Dorsolateral prefrontal cortex (tissue), 120 donors: ENCODE measurements at regions of chr18 and their contacts with region 1.

Region 1: GRCh38 chr18:35756506-35757117 is 175.1 kb downstream of the GALNT1 start:
- DNase-seq: peak in 6 of 10 donors; percentile 9 to 59 (median 50)
- H3K4me3 ChIP-seq: no peak overlapping the region
- H3K27ac ChIP-seq: no peak overlapping the region
- H3K27me3 ChIP-seq: no peaks in the 10 kb centered on the region
- CTCF ChIP-seq: peak; percentile 75 to 94 (median 86)

Region 2: GRCh38 chr18:35386600-35387351 is 369.8 kb before region 1 on chr18:
- intact Hi-C with region 1: loop called in 1 of 2 experiments (anchors 5 kb)
- DNase-seq: peak in 8 of 10 donors; percentile 25 to 70 (median 54)
- H3K4me3 ChIP-seq: peak overlapping the region in 16 of 59 donors; percentile 1 to 45 (median 16)
- H3K27ac ChIP-seq: peak overlapping the region in 7 of 59 donors; percentile 17 to 56 (median 33)
- H3K27me3 ChIP-seq: no peaks in the 10 kb centered on the region
- CTCF ChIP-seq: peak; percentile 76 to 96 (median 88)

Region 3: DNA sequence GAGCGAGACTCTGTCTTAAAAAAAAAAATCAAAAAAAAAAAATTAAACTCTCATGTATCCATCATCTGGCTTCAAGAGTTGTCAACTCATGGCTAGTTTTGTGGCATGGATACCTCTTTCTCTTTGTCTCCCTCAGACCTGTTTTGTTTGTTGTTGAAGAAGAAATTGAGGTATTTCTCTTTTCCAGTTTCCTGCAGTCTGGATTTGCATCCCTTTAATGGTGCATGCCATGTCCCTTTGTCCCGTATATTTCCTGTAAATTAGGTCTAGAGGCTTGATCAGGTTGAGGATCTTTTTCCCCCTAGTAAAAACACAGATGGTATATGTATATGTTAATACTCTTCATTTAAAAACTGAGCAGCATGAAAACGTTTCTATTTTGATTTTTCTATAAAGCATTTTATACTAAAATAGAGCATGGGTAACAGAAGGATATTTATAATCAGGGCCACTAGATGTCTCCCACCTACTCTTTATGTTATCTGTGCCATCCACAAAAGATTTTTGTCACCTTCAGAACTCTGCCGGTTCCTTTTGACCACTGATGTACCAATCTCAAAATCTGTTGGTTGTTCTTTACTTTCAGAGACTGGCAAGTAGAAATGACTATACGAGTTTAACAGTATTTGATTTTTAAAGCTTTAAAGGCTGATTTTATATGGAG is 95.0 kb before region 1 on chr18:
- intact Hi-C with region 1: loop called (anchors 5 to 10 kb)
- DNase-seq: no peak
- H3K4me3 ChIP-seq: no peak overlapping the region
- H3K27ac ChIP-seq: no peak overlapping the region
- H3K27me3 ChIP-seq: no peaks in the 10 kb centered on the region
- CTCF ChIP-seq: peak in 51 of 56 donors; percentile 14 to 72 (median 48)

Region 4: DNA sequence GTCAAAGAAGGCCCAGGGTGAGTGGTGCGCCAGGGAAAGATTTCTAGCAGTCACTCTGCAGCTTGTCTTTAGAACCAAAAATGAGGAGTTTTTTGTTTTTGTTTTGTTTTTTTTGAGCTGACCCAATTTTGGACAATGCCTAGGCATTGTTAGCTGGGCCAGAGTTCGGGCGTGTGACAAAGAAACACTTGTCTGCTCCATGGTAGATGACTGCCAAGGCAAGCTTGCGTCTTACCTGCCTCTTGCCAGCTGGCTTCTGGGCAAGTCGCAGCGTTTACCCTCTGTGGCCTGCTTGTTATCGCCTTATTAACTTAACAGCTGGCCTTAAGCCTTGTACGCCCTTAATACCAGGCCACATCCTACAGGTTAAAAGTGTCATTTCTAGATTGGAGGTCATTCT is 60.8 kb before region 1 on chr18:
- intact Hi-C with region 1: loop called in 1 of 2 experiments (anchors 2 kb)
- DNase-seq: peak; percentile 55 to 89 (median 83)
- H3K4me3 ChIP-seq: peak overlapping the region in 4 of 59 donors; percentile 1 to 23 (median 5)
- H3K27ac ChIP-seq: peak overlapping the region in 56 of 59 donors; percentile 2 to 81 (median 59)
- H3K27me3 ChIP-seq: no peaks in the 10 kb centered on the region
- CTCF ChIP-seq: peak in 6 of 56 donors; percentile 9 to 31 (median 22)

Region 5: GRCh38 chr18:35811896-35812295 is 55.3 kb after region 1 on chr18:
- intact Hi-C with region 1: no loop called
- DNase-seq: no peak
- H3K4me3 ChIP-seq: no peak overlapping the region
- H3K27ac ChIP-seq: no peak overlapping the region
- H3K27me3 ChIP-seq: peaks cover 0 to 10% (median 0%) of the 10 kb centered on the region in 45 donors
- CTCF ChIP-seq: no peak

Region 6: GRCh38 chr18:35889677-35890076 is 133.1 kb after region 1 on chr18:
- intact Hi-C with region 1: no loop called
- DNase-seq: no peak
- H3K4me3 ChIP-seq: no peak overlapping the region
- H3K27ac ChIP-seq: peak overlapping the region in 1 of 59 donors; percentile 45
- H3K27me3 ChIP-seq: no peaks in the 10 kb centered on the region
- CTCF ChIP-seq: no peak

Region 7: DNA sequence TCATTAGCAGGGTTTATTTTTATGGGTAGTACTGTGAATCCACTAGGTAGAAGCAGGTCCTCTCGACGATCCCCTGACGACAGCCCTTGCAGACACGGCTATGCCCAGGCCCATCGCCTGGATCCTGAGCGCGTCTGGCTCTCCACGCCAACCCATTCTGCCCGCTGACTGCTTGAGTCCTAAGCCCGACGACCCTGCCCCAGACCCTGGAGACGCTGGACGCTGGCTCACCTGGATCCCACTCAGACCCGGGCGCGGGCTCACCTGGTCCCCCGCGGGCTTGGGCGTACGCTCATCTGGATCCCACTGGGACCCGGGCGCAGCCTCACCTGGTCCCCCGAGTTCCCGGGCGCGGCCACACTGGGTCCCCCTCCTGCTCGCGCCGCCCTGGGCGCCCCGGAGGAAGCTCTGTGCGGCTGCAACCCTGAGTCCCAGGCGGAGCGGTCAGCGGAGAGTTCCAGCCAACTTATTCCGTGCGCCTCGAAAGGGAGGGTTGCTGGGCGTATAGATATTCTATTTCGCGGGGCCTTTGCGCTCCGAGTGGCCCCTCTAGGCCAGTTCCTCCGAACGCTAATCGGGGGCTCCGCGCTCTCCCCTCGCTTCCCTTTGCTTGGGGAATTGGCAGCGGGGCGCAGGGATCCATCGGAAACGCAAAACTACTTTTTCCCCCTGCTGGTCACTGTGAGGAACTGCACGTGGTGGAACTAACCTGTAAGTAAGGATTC is 193.5 kb after region 1 on chr18:
- intact Hi-C with region 1: loop called (anchors 2 to 5 kb)
- DNase-seq: peak in 9 of 10 donors; percentile 30 to 70 (median 55)
- H3K4me3 ChIP-seq: peak overlapping the region; percentile 41 to 88 (median 67)
- H3K27ac ChIP-seq: no peak overlapping the region
- H3K27me3 ChIP-seq: peaks cover 0 to 5% (median 0%) of the 10 kb centered on the region in 45 donors
- CTCF ChIP-seq: peak; percentile 91 to 99 (median 96)

Region 8: DNA sequence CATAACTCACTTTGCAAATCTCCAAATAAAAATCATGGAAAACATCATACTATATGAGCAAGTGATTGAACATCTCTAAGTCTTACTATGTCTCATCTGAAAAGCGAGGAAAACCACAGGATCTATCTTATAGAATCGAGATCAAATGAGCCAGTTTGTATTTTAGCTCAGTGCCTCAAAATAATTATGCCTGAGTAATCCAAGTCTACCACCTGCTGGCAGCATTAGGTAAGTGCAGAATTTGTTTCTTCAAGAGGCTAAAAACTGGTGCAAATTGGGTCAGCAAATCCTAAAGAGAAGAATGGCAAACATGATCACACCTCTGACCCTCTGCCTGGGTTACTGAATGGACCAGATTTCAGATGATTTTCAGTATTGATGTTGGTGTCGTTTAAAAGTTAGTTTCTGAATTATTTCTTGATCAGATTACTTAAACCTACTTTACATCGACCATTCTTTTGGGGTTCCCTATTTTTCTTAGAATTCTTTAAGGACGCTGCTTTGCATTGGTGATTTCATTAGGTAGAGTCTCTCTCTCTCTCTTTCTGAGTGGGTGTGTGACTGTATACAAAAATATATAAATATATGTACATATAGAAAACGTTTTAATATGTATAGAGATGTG is 528.2 kb after region 1 on chr18:
- intact Hi-C with region 1: loop called (anchors 5 to 10 kb)
- DNase-seq: peak in 2 of 10 donors; percentile 41 to 61
- H3K4me3 ChIP-seq: no peak overlapping the region
- H3K27ac ChIP-seq: no peak overlapping the region
- H3K27me3 ChIP-seq: peaks cover 0 to 5% (median 0%) of the 10 kb centered on the region in 45 donors
- CTCF ChIP-seq: peak; percentile 78 to 99 (median 93)